Activated B cell treated with CpG ODN at 0.5 μM for 24 hours (primary cell): ENCODE measurements at regions of chr19 and their contacts with region 1.

Region 1: DNA sequence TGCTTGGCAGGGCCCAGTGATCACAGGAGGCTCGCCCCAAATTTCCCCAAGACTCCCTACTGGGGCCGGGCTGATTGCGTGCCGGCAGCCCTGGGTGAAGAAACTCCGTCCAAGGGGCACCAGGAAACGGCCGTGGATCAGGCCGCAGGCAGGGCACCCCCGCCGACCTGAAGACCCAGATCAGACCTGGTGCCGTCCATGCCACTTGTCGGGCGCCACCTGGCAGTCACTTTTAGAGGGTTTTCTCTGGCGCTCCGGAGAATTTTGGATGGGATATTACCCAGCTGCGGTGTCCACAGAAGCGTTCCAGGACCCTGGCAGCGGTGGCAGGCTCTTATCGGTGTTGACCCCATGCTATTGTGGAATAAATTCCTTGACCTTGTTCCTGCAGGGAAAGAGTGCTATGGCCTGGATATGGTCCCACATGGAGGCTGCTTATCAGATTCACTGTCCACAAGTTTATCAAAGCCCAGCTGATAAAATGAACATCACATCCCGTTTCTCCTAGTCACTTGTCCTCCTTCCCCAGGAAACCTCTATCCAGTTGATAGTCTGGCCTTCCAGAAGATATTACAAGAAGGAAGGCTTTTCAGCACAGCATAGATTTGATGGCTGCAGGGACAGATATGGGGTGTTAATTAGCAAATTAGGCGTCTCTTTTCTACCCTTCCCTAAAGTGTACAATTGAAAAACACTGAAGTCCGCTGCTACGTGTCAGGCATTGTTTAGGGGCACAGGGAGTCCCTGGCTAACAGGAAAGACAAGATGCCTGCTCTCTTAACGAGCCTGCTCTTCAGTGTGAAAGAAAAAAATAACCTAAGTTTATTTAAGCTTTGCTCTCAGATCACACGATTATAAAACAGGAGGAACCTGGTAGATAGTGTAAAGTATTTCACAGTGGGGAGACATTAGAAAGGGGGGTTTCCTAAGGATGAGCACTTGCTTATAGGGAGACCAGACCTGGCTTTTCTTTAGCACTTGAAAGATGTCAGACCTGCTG is 38.4 kb downstream of the IGFL2 start:
- DNase-seq: no peak
- ATAC-seq: no peak
- H3K4me3 Mint-ChIP-seq: no peak overlapping the region
- H3K27ac Mint-ChIP-seq: no peak overlapping the region
- H3K4me1 Mint-ChIP-seq: peaks cover 20% of the 10 kb centered on the region
- H3K27me3 Mint-ChIP-seq: peaks cover 42% of the 10 kb centered on the region
- CTCF ChIP-seq: no peak

Region 2: DNA sequence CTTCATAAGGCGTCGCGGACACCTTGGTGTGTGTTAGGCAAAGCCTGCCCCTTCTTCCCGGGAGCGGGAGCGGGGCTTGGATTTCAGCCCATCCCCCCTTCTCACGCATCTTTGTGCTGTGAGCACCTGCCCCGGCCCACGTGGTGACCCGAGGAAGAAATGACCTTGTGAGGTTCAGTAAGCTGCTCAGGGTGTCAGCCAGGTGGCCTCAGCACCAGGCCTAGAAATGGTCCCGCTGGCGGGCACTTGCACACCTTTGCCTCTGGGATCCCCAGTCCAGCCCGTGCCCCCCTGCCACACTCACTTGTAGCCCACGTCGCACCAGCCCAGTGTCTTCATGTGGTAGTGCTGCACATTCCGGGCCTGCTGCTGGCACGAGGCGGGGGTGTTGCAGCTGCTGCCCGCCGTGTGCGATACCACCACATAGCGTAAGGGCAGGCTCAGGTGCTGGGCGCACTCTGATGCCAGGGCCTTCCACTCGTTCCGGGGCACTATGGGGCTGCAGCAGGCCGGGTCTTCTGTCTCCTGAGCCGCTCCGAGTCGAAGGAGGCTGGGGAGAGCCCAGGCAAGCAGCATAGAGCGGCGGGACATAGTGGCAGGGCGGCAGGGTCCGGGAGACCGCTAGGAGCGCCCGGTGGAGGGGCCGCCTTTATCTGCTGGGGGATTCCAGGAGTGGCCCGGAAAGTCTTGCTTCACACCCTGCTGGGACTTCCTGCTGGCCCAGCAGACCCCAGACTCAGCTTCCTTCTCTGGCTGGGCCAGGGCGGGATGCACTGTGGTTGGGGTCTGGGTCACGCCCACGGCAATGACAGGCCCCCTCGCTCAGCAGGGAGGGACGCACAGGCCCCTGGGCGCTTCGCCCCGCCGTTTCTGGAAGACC is 163.7 kb before region 1 on chr19 and contains the start of gene PGLYRP1:
- CTCF ChIA-PET with region 1: interaction called, 32 read pairs
- POLR2A ChIA-PET with region 1: no interaction called
- intact Hi-C with region 1: no loop called
- DNase-seq: no peak
- ATAC-seq: no peak
- H3K4me3 Mint-ChIP-seq: no peak within 1 kb of the TSS
- H3K27ac Mint-ChIP-seq: no peak within 1 kb of the TSS
- H3K4me1 Mint-ChIP-seq: no peaks in the 10 kb centered on the region
- H3K27me3 Mint-ChIP-seq: peaks cover 20% of the 10 kb centered on the region
- CTCF ChIP-seq: no peak
- total RNA-seq, gene PGLYRP1: not detected in 2 replicates

Region 3: GRCh38 chr19:46081928-46082727 is 104.3 kb before region 1 on chr19:
- CTCF ChIA-PET with region 1: interaction called, 11 read pairs
- POLR2A ChIA-PET with region 1: no interaction called
- intact Hi-C with region 1: loop called (anchors 2 kb)
- DNase-seq: no peak
- ATAC-seq: no peak
- H3K4me3 Mint-ChIP-seq: no peak overlapping the region
- H3K27ac Mint-ChIP-seq: no peak overlapping the region
- H3K4me1 Mint-ChIP-seq: no peaks in the 10 kb centered on the region
- H3K27me3 Mint-ChIP-seq: peaks cover 55% of the 10 kb centered on the region
- CTCF ChIP-seq: no peak